Activated CD4-positive, alpha-beta memory T cell treated with anti-CD3 and anti-CD28 coated beads for 36 hours (primary cell): ENCODE measurements at regions of chr1 and their contacts with region 1.

Region 1: DNA sequence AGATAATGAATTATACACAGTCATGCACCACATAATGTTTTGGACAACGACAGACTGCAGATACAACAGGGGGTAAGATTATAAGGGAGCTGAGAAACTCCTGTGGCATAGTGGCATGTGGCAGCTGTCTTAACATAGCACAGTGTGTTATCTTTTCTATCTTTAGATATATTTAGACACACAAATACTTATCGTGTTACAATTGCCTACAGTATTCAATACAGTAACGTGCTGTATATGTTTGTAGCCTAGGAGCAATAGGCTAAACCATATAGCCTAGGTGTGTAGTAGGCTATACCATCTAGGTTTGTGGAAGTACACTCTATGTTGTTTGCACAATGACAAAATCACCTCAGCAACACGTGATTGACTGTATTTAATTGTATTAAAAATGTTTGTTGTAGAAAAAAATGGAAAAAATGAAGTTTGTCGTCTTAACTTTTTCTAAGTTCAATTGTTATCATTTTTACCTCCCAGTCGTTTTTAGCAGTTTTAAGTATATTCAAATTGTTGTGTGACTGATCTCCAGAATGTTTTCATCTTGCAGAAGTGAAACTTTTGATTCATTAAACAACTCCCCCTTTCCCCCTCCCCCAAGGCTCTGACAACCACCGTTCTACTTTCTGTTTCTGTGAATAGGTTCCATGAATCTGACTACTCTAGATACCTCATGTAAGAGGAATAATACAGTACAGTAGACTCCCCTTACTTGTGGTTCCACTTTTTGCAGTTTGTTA is 351.0 kb upstream of the B3GALT2 start:
- DNase-seq: peak; percentile 85
- H3K4me3 Mint-ChIP-seq: peak overlapping the region; percentile 17
- H3K27ac Mint-ChIP-seq: peak overlapping the region; percentile 74
- H3K4me1 Mint-ChIP-seq: peaks cover 47% of the 10 kb centered on the region
- H3K27me3 Mint-ChIP-seq: no peaks in the 10 kb centered on the region

Region 2: DNA sequence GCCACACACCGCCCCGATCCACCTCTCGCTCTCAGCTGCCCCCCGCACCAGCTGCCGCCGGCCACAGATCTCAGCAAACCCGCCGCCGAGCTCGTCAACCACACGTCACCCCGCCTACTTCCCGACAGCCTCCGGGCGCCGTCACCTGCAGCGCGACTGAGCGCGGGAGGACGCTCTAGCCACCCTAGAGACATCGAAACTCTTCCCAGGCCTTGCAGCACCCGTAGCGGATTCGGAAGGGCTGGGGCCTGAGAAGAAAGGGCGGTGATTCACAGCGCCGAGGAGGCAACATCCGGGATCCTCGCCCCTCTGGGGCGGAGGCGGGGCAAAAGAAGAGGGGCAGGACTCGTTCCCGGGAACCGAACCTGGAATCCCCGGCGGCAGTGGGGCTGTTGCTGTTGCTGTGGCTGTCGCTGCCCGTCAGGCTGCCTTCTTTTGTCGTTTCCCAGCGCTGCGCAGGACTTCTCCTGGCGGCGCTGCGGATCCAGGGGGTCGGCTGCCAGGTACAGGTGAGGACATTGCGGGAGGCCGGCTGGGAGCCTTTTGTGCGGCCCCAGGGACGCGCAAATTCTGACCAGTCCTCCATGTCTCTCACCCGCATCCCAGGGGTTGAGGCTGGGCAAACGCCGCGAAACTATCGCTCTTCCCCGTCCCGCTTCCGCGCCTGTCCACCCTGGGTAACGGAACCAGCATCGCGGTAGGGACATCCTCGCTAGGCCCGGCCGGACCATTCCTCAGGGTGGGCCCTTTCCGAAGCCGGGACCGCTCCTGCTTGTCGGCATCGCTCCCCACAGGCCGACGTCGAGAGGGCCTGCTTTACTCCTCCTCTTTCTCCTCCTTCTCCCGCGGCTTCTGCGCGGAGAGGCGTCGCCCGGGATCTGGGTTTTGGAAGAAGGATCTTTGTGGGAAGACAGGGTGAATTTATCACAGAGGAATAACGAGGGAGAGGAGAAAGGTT is 477.9 kb before region 1 on chr1 and contains the starts of genes RO60 and UCHL5:
- CTCF ChIA-PET with region 1: no interaction called
- POLR2A ChIA-PET with region 1: no interaction called
- intact Hi-C with region 1: loop called (anchors 2 kb)
- DNase-seq: peak; percentile 98
- H3K4me3 Mint-ChIP-seq: peak within 1 kb of the TSS; percentile 92
- H3K27ac Mint-ChIP-seq: peak within 1 kb of the TSS; percentile 98
- H3K4me1 Mint-ChIP-seq: peaks cover 57% of the 10 kb centered on the region
- H3K27me3 Mint-ChIP-seq: peaks cover 1% of the 10 kb centered on the region
- total RNA-seq, gene RO60: 56.5 to 65.8 TPM
- total RNA-seq, gene UCHL5: 72.1 to 77.5 TPM

Region 3: GRCh38 chr1:193406901-193407300 is 130.5 kb before region 1 on chr1:
- CTCF ChIA-PET with region 1: interaction called, 3 read pairs
- POLR2A ChIA-PET with region 1: no interaction called
- intact Hi-C with region 1: loop called (anchors 1 kb)
- DNase-seq: no peak
- H3K4me3 Mint-ChIP-seq: no peak overlapping the region
- H3K27ac Mint-ChIP-seq: no peak overlapping the region
- H3K4me1 Mint-ChIP-seq: peaks cover 29% of the 10 kb centered on the region
- H3K27me3 Mint-ChIP-seq: no peaks in the 10 kb centered on the region

Region 4: GRCh38 chr1:193479187-193479586 is 58.2 kb before region 1 on chr1:
- CTCF ChIA-PET with region 1: no interaction called
- POLR2A ChIA-PET with region 1: no interaction called
- intact Hi-C with region 1: loop called (anchors 1 kb)
- DNase-seq: peak; percentile 86
- H3K4me3 Mint-ChIP-seq: peak overlapping the region; percentile 11
- H3K27ac Mint-ChIP-seq: peak overlapping the region; percentile 81
- H3K4me1 Mint-ChIP-seq: peaks cover 53% of the 10 kb centered on the region
- H3K27me3 Mint-ChIP-seq: no peaks in the 10 kb centered on the region

Region 5: GRCh38 chr1:193558491-193559028 is 21.1 kb after region 1 on chr1:
- CTCF ChIA-PET with region 1: no interaction called
- POLR2A ChIA-PET with region 1: interaction called, 6 read pairs
- intact Hi-C with region 1: loop called (anchors 1 kb)
- DNase-seq: peak; percentile 20
- H3K4me3 Mint-ChIP-seq: no peak overlapping the region
- H3K27ac Mint-ChIP-seq: peak overlapping the region; percentile 1
- H3K4me1 Mint-ChIP-seq: peaks cover 22% of the 10 kb centered on the region
- H3K27me3 Mint-ChIP-seq: no peaks in the 10 kb centered on the region

Region 6: GRCh38 chr1:193700710-193701355 is 163.4 kb after region 1 on chr1:
- CTCF ChIA-PET with region 1: no interaction called
- POLR2A ChIA-PET with region 1: no interaction called
- intact Hi-C with region 1: loop called (anchors 1 kb)
- DNase-seq: no peak
- H3K4me3 Mint-ChIP-seq: no peak overlapping the region
- H3K27ac Mint-ChIP-seq: peak overlapping the region; percentile 40
- H3K4me1 Mint-ChIP-seq: peaks cover 21% of the 10 kb centered on the region
- H3K27me3 Mint-ChIP-seq: no peaks in the 10 kb centered on the region

Region 7: DNA sequence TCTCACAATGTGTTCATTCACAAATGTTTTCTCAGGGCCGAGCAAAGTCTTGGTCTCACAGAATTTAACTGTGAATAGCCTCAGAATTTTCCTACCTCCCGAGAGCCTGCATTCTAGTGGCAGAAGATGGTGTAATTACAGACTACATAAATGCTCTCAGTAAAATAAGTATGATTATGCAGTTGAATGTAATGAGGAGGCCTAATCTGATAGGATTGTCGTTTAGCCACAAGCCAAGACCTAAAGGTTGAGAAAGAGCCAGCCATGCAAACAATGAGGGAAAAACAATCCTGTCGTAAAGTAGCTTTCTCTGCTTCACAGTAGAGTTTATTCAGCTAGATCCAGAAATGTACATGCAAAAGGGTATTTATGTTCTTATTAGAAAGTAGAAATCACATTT is 256.8 kb after region 1 on chr1:
- CTCF ChIA-PET with region 1: no interaction called
- POLR2A ChIA-PET with region 1: no interaction called
- intact Hi-C with region 1: no loop called
- DNase-seq: no peak
- H3K4me3 Mint-ChIP-seq: no peak overlapping the region
- H3K27ac Mint-ChIP-seq: no peak overlapping the region
- H3K4me1 Mint-ChIP-seq: peaks cover under 1% of the 10 kb centered on the region
- H3K27me3 Mint-ChIP-seq: no peaks in the 10 kb centered on the region

Region 8: GRCh38 chr1:194512957-194513356 is 975.5 kb after region 1 on chr1:
- CTCF ChIA-PET with region 1: no interaction called
- POLR2A ChIA-PET with region 1: no interaction called
- intact Hi-C with region 1: no loop called
- DNase-seq: no peak
- H3K4me3 Mint-ChIP-seq: no peak overlapping the region
- H3K27ac Mint-ChIP-seq: no peak overlapping the region
- H3K4me1 Mint-ChIP-seq: no peaks in the 10 kb centered on the region
- H3K27me3 Mint-ChIP-seq: no peaks in the 10 kb centered on the region

Region 9: DNA sequence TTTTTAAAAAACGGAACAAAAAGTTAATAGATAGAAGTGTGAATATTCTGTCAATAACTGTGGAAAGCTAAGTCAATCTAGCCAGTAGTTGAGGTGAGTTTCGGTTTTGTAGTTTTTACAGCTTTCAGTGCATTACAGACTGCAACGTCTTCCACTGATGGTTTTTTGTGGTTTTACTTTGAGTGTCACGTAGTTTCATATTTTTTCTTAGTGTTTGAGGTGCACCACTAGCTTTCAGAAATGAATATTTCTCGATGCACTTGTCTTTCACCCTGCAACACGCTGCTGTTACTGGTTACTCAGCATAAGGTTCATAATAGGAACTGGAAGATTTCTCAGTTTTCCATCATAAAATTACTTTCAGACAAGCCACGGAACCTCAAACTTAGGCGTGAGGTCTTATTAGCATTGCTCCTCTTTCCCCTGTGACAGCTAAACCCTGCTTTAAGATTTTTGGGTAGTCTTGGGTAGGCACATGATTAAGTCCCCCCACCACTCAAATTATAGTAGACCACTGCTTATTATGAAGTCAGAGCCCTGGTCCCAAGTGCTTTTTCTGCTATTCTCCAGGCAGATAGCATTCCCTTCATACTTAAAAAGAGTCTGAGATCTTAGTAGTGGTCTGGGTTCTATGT is 1658.1 kb after region 1 on chr1:
- CTCF ChIA-PET with region 1: no interaction called
- POLR2A ChIA-PET with region 1: no interaction called
- intact Hi-C with region 1: loop called (anchors 5 kb)
- DNase-seq: peak; percentile 31
- H3K4me3 Mint-ChIP-seq: peak overlapping the region; percentile 31
- H3K27ac Mint-ChIP-seq: peak overlapping the region; percentile 20
- H3K4me1 Mint-ChIP-seq: peaks cover 28% of the 10 kb centered on the region
- H3K27me3 Mint-ChIP-seq: peaks cover 33% of the 10 kb centered on the region